Caco-2 (cell line): ENCODE measurements at regions of chr9 and their contacts with region 1.

Region 1: DNA sequence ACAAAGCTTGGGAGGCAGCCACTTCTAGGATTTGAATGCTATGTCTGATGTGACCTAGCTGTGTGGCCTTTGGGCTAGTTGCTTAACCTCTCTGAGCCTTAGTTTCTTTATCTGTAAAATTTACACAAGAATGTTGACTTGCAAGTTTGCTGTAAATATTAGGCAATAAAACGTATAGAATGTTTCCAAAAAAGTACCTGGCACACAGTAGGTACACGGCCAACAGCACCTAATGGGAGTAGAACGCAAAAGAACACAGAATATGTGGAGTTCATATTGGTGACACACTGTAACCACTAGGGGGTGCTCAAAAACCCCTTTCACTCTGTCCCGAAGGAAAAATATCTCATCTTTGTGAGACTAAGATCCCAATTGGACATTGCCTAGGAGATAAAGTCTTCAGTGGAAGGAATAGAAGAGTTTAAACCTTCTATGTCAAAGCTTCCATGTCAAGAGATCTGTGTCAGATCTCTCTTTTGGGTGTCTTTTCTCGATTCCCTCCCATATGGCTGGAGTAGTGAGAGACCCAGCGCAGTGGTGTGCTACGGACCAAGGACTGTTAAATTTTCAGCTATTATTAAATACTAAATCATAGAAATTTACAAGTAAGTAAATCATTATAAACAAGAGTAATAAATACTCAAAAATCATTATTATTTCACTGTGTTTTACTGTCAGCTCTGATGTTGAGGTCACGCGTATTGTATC is 145.4 kb upstream of the RAD23B start:
- DNase-seq: peak in 1 of 2 experiments; percentile 44
- H3K4me3 ChIP-seq: no peak overlapping the region
- H3K4me3 Mint-ChIP-seq: no peak overlapping the region
- H3K27ac Mint-ChIP-seq: no peak overlapping the region
- H3K4me1 ChIP-seq: no peaks in the 10 kb centered on the region; the same call in 1 of the 2 replicates
- H3K4me1 Mint-ChIP-seq: no peaks in the 10 kb centered on the region
- H3K27me3 ChIP-seq: no peaks in the 10 kb centered on the region
- H3K27me3 Mint-ChIP-seq: peaks cover 8% of the 10 kb centered on the region
- CTCF ChIP-seq: peak; percentile 36 to 47

Region 2: DNA sequence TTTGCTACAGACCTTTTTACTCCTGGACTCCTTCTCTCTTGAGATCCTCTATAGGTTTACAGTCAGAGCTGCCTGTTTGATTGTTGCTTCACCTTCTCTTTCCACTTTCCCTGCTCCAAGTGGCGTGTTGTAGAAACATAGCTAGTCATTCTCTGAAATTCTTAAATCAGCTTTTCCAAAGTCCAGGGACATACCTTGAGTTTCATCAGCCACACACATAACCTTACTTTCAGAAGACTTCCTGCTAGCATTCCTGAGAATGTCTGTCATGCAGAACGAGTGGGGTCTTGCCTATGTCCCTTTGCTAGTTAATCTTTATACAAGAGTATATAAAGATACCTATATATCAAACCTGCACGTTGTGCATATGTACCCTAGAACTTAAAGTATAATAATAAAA is 505.0 kb before region 1 on chr9:
- CTCF ChIA-PET with region 1: no interaction called
- POLR2A ChIA-PET with region 1: no interaction called
- intact Hi-C with region 1: loop called (anchors 10 kb)
- DNase-seq: peak; percentile 36 to 48
- H3K4me3 ChIP-seq: no peak overlapping the region
- H3K4me3 Mint-ChIP-seq: peak overlapping the region; percentile 17
- H3K27ac Mint-ChIP-seq: peak overlapping the region; percentile 13
- H3K4me1 ChIP-seq: peaks cover 19% of the 10 kb centered on the region
- H3K4me1 Mint-ChIP-seq: peaks cover 12% of the 10 kb centered on the region
- H3K27me3 ChIP-seq: no peaks in the 10 kb centered on the region
- H3K27me3 Mint-ChIP-seq: no peaks in the 10 kb centered on the region
- CTCF ChIP-seq: no peak

Region 3: DNA sequence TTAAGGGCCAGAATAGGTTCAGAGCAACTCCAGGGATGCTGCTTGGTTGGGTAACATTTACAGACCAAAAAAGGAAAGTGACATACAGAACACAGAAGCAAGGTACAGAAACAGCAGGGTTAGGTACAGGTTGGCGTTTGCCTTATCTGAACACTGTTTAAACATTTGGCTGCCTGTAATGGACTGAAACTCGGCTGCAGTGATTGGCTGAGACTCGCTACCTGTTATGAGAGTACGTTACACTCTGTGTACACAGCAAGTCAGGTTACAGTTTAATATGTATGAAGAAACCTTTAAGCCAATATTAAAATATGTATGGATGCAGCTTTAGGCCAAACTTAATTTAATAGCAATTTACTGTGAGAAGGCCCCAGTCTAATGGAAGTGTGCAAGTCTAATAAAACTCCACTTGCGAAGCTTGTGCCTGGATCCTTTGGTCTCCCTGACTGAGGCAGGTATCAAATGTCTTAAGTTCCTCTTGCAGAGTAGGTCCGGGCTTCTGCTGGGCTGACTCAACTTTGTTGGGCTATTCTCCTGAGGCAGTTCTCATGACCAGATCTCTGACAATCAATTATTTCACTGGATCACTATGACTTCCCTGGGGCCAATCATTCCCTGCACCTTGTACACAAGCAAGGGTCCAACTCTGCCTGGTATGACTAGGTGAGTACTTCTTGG is 69.8 kb before region 1 on chr9:
- CTCF ChIA-PET with region 1: no interaction called
- POLR2A ChIA-PET with region 1: no interaction called
- intact Hi-C with region 1: loop called (anchors 10 kb)
- DNase-seq: peak; percentile 63 to 76
- H3K4me3 ChIP-seq: no peak overlapping the region
- H3K4me3 Mint-ChIP-seq: peak overlapping the region; percentile 41
- H3K27ac Mint-ChIP-seq: peak overlapping the region; percentile 21
- H3K4me1 ChIP-seq: peaks cover 31% of the 10 kb centered on the region
- H3K4me1 Mint-ChIP-seq: peaks cover 25% of the 10 kb centered on the region
- H3K27me3 ChIP-seq: no peaks in the 10 kb centered on the region
- H3K27me3 Mint-ChIP-seq: no peaks in the 10 kb centered on the region
- CTCF ChIP-seq: no peak